Caco-2 (cell line): ENCODE measurements at regions of chr9 and their contacts with region 1.

Region 1: GRCh38 chr9:134217832-134218629 is 53.7 kb upstream of the RNU6ATAC start:
- DNase-seq: peak; percentile 67 to 71
- H3K4me3 ChIP-seq: no peak overlapping the region
- H3K4me3 Mint-ChIP-seq: no peak overlapping the region
- H3K27ac Mint-ChIP-seq: no peak overlapping the region
- H3K4me1 ChIP-seq: no peaks in the 10 kb centered on the region; the same call in 1 of the 2 replicates
- H3K4me1 Mint-ChIP-seq: no peaks in the 10 kb centered on the region
- H3K27me3 ChIP-seq: no peaks in the 10 kb centered on the region
- H3K27me3 Mint-ChIP-seq: no peaks in the 10 kb centered on the region
- CTCF ChIP-seq: peak; percentile 44 to 53

Region 2: GRCh38 chr9:134152022-134152448 is 66.0 kb before region 1 on chr9:
- CTCF ChIA-PET with region 1: no interaction called
- POLR2A ChIA-PET with region 1: no interaction called
- intact Hi-C with region 1: no loop called
- DNase-seq: no peak
- H3K4me3 ChIP-seq: no peak overlapping the region
- H3K4me3 Mint-ChIP-seq: no peak overlapping the region
- H3K27ac Mint-ChIP-seq: no peak overlapping the region
- H3K4me1 ChIP-seq: no peaks in the 10 kb centered on the region
- H3K4me1 Mint-ChIP-seq: no peaks in the 10 kb centered on the region
- H3K27me3 ChIP-seq: no peaks in the 10 kb centered on the region
- H3K27me3 Mint-ChIP-seq: no peaks in the 10 kb centered on the region
- CTCF ChIP-seq: no peak

Region 3: DNA sequence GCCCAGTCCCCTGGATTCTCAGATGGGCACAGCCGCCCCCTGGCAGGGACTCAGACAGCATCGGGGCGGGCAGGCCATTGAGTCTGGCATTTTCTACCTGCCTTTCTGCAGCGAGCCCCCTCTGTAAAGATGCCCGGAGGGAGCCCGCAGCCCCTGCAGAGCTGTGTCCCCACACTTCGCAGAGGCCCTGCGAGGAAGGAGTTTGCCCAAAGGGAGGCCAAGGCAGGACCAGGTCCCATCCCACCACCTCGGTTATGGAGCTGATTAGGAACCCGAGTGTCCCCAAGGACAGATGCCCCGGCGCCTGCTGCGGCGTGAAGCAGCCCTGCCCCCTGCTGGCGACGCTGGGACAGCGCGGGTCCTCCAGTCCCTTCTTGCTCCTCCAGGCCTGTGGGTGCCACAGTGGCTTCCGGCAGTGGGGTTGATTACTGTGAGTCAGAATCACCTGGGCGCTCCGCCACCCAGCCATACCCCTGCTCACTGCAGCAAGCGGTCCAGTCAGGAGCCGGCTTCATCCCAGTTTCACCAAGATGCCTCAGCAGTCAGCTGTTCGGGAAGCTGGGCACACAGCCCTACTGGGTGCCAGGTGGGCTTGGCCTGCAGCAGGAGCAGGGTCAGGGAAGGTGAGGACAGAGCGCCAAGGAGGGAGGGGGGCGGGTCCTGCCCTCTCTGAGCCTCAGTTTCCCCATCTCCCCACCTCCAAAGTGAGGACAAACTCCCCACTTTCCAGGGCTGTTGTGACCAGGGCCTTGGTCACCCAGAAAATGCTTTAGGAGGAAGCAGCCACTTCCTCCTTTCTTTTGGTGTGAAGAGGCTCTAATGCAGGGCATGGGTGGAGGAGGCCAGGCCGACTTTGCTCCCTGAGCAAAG is 225.4 kb after region 1 on chr9:
- CTCF ChIA-PET with region 1: interaction called, 3 read pairs
- POLR2A ChIA-PET with region 1: no interaction called
- intact Hi-C with region 1: loop called (anchors 5 kb)
- DNase-seq: peak; percentile 84 to 85
- H3K4me3 ChIP-seq: no peak overlapping the region
- H3K4me3 Mint-ChIP-seq: no peak overlapping the region
- H3K27ac Mint-ChIP-seq: no peak overlapping the region
- H3K4me1 ChIP-seq: 0 out of 2 replicates have a peak, but pooled peaks cover 2% of the 10 kb centered on the region
- H3K4me1 Mint-ChIP-seq: no peaks in the 10 kb centered on the region
- H3K27me3 ChIP-seq: no peaks in the 10 kb centered on the region
- H3K27me3 Mint-ChIP-seq: no peaks in the 10 kb centered on the region
- CTCF ChIP-seq: peak; percentile 93 to 97